Heart right ventricle (tissue), 16 donors: ENCODE measurements at regions of chr11 and their contacts with region 1.

Region 1: GRCh38 chr11:3947061-3947460 is 91.6 kb downstream of the STIM1 start:
- DNase-seq: peak in 1 of 2 donors; percentile 74
- ATAC-seq: peak; percentile 86 to 92 (median 90)
- H3K4me3 ChIP-seq: no peak overlapping the region
- H3K27ac ChIP-seq: peak overlapping the region; percentile 71 to 87 (median 77)
- H3K4me1 ChIP-seq: peaks cover 16 to 97% (median 81%) of the 10 kb centered on the region in 9 donors
- H3K27me3 ChIP-seq: no peaks in the 10 kb centered on the region
- CTCF ChIP-seq: no peak

Region 2: GRCh38 chr11:3867209-3868091 is 79.6 kb before region 1 on chr11:
- intact Hi-C with region 1: loop called in 1 of 10 experiments (anchors 10 kb)
- DNase-seq: peak; percentile 31 to 80
- ATAC-seq: peak; percentile 89 to 96 (median 93)
- H3K4me3 ChIP-seq: no peak overlapping the region
- H3K27ac ChIP-seq: peak overlapping the region; percentile 50 to 79 (median 70)
- H3K4me1 ChIP-seq: peaks cover 24 to 63% (median 45%) of the 10 kb centered on the region in 9 donors
- H3K27me3 ChIP-seq: no peaks in the 10 kb centered on the region
- CTCF ChIP-seq: no peak

Region 3: DNA sequence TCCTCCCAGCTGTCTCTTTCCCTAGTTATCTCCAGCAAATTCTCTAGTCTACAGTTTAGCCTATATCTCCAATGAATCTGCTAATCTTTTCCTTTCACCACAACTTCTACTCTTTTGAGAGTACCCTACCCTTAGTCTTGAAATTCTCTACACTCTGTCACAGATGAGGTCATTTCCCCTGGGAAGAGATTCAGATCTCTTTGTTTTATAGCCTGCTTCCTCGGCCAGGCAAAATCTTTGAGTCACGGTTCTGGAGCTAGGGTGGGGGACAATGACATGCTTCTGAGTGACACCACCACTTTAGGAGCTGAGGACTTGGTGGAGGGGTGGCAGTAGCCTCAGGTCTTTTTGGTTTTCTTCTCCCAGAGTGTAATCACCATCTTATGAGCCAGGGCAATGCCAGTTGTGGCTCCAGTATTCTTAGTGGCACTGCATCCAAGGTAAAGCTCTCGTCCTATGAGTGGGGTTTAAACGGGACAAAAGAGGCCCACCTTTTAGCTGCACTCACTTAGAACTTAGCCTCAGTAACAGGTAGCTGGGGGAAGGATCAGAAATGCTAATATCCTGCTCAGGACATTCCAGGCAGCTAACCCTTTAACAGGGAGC is 49.0 kb after region 1 on chr11:
- intact Hi-C with region 1: no loop called
- DNase-seq: peak in 1 of 2 donors; percentile 21
- ATAC-seq: peak in 7 of 8 donors; percentile 41 to 90 (median 83)
- H3K4me3 ChIP-seq: no peak overlapping the region
- H3K27ac ChIP-seq: peak overlapping the region in 3 of 10 donors; percentile 10 to 62 (median 40)
- H3K4me1 ChIP-seq: peaks cover 0 to 22% (median 13%) of the 10 kb centered on the region in 9 donors
- H3K27me3 ChIP-seq: no peaks in the 10 kb centered on the region
- CTCF ChIP-seq: no peak

Region 4: DNA sequence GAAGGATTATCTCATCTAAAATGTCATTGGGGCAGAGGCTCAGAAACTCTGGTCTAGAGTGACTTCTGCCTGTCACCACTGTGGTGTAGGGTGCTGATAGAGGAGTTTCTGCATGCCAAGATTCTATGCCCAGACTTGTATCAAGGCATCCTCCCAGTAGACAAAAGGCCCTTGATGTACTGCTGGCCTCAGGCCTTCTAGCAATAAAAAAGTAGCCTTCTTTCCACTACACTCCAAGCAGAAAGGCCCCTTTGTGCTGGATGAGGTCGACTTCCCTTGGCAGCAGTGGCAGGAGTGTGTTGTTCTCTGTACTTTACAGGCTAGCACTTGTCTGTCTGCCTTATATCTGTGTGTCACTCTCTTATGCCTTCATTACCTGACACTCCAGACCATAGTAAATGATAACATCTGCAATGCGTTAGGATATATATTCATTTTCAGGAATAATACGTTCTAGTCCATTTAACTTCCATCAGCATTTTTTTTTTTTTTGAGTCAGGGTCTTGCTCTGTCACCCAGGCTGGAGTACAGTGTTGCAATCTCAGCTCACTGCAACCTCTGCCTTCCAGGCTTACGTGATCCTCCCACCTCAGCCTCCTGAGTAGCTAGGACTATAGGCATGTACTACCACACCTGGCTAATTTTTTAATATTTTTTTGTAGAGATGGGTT is 98.0 kb after region 1 on chr11:
- intact Hi-C with region 1: loop called in 3 of 10 experiments (anchors 5 to 10 kb)
- DNase-seq: no peak
- ATAC-seq: peak in 7 of 8 donors; percentile 35 to 81 (median 61)
- H3K4me3 ChIP-seq: no peak overlapping the region
- H3K27ac ChIP-seq: peak overlapping the region in 5 of 10 donors; percentile 0 to 61 (median 35)
- H3K4me1 ChIP-seq: peaks cover 0 to 43% (median 27%) of the 10 kb centered on the region in 9 donors
- H3K27me3 ChIP-seq: no peaks in the 10 kb centered on the region
- CTCF ChIP-seq: no peak

Region 5: GRCh38 chr11:4065601-4066377 is 118.7 kb after region 1 on chr11:
- intact Hi-C with region 1: loop called in 1 of 10 experiments (anchors 10 kb)
- DNase-seq: peak in 1 of 2 donors; percentile 48
- ATAC-seq: peak; percentile 69 to 90 (median 83)
- H3K4me3 ChIP-seq: no peak overlapping the region
- H3K27ac ChIP-seq: peak overlapping the region in 4 of 10 donors; percentile 15 to 48 (median 30)
- H3K4me1 ChIP-seq: peaks cover 3 to 46% (median 35%) of the 10 kb centered on the region in 9 donors
- H3K27me3 ChIP-seq: no peaks in the 10 kb centered on the region
- CTCF ChIP-seq: peak in 3 of 9 donors; percentile 10 to 21 (median 17)

Region 6: GRCh38 chr11:4203603-4204360 is 256.7 kb after region 1 on chr11:
- intact Hi-C with region 1: no loop called
- DNase-seq: no peak
- ATAC-seq: peak; percentile 55 to 94 (median 88)
- H3K4me3 ChIP-seq: no peak overlapping the region
- H3K27ac ChIP-seq: peak overlapping the region in 6 of 10 donors; percentile 2 to 62 (median 32)
- H3K4me1 ChIP-seq: peaks cover 0 to 21% (median 0%) of the 10 kb centered on the region in 9 donors
- H3K27me3 ChIP-seq: no peaks in the 10 kb centered on the region
- CTCF ChIP-seq: peak in 7 of 9 donors; percentile 12 to 37 (median 18)